GM10248 (cell line): ENCODE measurements at regions of chr6 and their contacts with region 1.

Region 1: GRCh38 chr6:118787724-118788423 is 106.1 kb upstream of the ASF1A start:
- DNase-seq: no peak
- CTCF ChIP-seq: no peak

Region 2: GRCh38 chr6:118668761-118669385 is 119.0 kb before region 1 on chr6:
- CTCF ChIA-PET with region 1: no interaction called
- POLR2A ChIA-PET with region 1: no interaction called
- DNase-seq: no peak
- CTCF ChIP-seq: no peak

Region 3: GRCh38 chr6:118776607-118777549 is 11.0 kb before region 1 on chr6:
- CTCF ChIA-PET with region 1: interaction called, 14 read pairs
- POLR2A ChIA-PET with region 1: no interaction called
- DNase-seq: peak; percentile 71
- CTCF ChIP-seq: peak; percentile 65

Region 4: DNA sequence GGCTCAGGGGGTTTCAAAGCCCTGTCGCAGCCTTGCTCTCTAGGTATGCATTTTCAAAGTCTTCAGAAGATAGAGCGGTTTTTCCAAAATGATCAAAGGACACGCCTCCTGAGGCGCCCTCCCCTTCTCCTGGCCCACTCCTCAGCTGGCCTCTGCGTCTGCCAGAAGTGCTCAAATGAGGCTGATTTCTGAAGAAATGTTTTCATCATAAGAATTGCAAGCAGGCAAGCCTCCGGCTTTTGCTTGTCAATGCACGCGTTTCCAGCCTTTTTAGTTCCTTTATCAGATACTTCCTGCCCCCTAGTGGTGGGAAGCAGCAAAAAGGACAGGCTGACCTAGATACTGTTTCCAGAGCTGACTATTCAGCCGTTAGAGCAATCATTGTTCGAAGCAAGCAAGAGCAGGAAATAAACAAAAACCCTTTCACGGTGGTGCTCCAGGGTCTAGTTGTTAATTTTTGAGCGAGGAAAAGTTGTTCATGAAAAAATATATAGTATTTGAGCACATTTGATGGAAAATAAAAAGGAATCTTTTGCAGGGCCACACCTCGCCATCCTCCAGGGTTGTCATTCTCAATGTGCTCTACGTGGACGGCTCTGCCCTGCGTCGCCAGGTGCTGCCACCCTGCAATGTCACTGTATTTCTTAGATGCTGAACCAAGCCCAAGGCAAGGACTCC is 12.7 kb after region 1 on chr6:
- CTCF ChIA-PET with region 1: interaction called, 74 read pairs
- POLR2A ChIA-PET with region 1: no interaction called
- DNase-seq: peak; percentile 81
- CTCF ChIP-seq: peak; percentile 90

Region 5: DNA sequence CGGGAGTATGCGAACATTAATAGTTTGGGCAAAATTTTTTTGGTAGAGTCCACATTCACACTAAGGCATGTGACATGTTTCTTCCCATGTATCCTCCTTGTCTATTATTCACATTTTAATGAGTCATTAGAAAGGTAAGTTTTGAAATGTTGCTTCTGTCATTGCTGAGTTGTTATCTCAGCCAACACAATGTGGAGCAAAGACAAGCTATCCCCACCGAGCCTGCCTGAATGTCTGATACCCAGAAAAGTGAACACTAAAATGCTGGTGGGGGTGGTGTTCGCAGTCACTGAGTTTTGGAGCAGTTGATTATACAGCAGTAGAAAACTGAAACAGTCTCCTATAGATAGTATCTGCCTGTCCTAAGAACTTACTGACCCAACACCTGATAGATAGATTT is 37.8 kb after region 1 on chr6:
- CTCF ChIA-PET with region 1: no interaction called
- POLR2A ChIA-PET with region 1: no interaction called
- DNase-seq: no peak
- CTCF ChIP-seq: no peak